ENCODE measurements at regions of chr6 and their contacts with region 1.

Region 1: GRCh38 chr6:35731736-35732532 is 4.9 kb upstream of the ARMC12 start:
- DNase-seq: peak; percentile 93 to 96 (median 94)
- H3K4me3 ChIP-seq: peak overlapping the region; percentile 30 to 85
- H3K4me3 Mint-ChIP-seq: peak overlapping the region; percentile 83 to 93 (median 88)
- H3K27ac ChIP-seq: peak overlapping the region; percentile 92
- H3K27ac Mint-ChIP-seq: peak overlapping the region; percentile 87 to 99 (median 96)
- H3K4me1 ChIP-seq: peaks cover 89% of the 10 kb centered on the region
- H3K4me1 Mint-ChIP-seq: peaks cover 50 to 92% (median 73%) of the 10 kb centered on the region in 4 donors
- H3K27me3 ChIP-seq: no peaks in the 10 kb centered on the region
- H3K27me3 Mint-ChIP-seq: no peaks in the 10 kb centered on the region

Region 2: GRCh38 chr6:35452186-35453090 is 279.5 kb before region 1 on chr6 and contains the start of gene FANCE:
- CTCF ChIA-PET with region 1: interaction called, 3 read pairs
- POLR2A ChIA-PET with region 1: interaction called, 4 read pairs
- intact Hi-C with region 1: loop called (anchors 5 kb)
- DNase-seq: peak; percentile 77 to 90 (median 81)
- H3K4me3 ChIP-seq: peak within 1 kb of the TSS; percentile 0 to 66
- H3K4me3 Mint-ChIP-seq: peak within 1 kb of the TSS; percentile 84 to 91 (median 87)
- H3K27ac ChIP-seq: peak within 1 kb of the TSS; percentile 59
- H3K27ac Mint-ChIP-seq: peak within 1 kb of the TSS; percentile 54 to 94 (median 89)
- H3K4me1 ChIP-seq: peaks cover 40% of the 10 kb centered on the region
- H3K4me1 Mint-ChIP-seq: peaks cover 29 to 53% (median 39%) of the 10 kb centered on the region in 4 donors
- H3K27me3 ChIP-seq: no peaks in the 10 kb centered on the region
- H3K27me3 Mint-ChIP-seq: no peaks in the 10 kb centered on the region
- total RNA-seq, gene FANCE: 8.9 to 9.0 TPM

Region 3: GRCh38 chr6:35583893-35584688 is 147.8 kb before region 1 on chr6:
- CTCF ChIA-PET with region 1: interaction called, 136 read pairs
- POLR2A ChIA-PET with region 1: interaction called, 20 read pairs
- intact Hi-C with region 1: loop called (anchors 1 kb)
- DNase-seq: peak; percentile 73 to 78 (median 76)
- H3K4me3 ChIP-seq: no peak overlapping the region
- H3K4me3 Mint-ChIP-seq: peak overlapping the region in 5 of 8 donors; percentile 17 to 63 (median 46)
- H3K27ac ChIP-seq: peak overlapping the region; percentile 12
- H3K27ac Mint-ChIP-seq: peak overlapping the region; percentile 39 to 89 (median 83)
- H3K4me1 ChIP-seq: peaks cover 45% of the 10 kb centered on the region
- H3K4me1 Mint-ChIP-seq: peaks cover 47 to 59% (median 50%) of the 10 kb centered on the region in 4 donors
- H3K27me3 ChIP-seq: no peaks in the 10 kb centered on the region
- H3K27me3 Mint-ChIP-seq: no peaks in the 10 kb centered on the region

Region 4: DNA sequence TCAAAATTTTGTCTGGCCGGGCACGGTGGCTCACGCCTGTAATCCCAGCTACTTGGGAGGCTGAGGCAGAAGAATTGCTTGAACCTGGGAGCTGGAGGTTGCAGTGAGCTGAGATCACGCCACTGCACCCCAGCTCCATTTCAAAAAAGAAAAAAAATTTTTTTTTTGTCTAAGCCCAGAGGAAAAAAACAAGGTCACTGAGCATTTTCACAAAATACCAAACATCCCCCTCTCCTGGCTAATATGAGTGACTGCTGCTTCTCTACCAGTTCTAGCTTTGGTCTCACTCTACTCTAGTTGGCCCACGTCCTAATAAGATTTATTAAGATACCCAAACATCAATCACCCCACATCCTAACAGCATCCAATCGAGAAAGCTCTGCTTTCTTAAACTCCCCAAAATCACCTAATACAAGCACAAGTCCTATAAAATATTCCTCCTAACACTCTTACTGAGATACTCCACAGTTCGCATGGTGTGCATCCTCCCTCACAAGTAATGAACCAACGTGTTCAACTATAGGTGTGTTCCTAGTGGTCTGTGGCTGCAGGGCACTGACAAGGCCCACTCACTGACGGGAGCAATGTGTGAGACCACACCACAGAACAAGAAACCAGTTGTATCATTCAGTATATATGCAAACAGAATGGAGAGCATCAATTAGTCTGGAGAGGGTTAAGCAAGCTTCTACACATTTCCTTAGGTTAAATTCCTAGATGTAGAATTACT is 107.4 kb before region 1 on chr6:
- CTCF ChIA-PET with region 1: interaction called, 360 read pairs
- POLR2A ChIA-PET with region 1: interaction called, 41 read pairs
- intact Hi-C with region 1: loop called (anchors 1 kb)
- DNase-seq: peak in 4 of 5 donors; percentile 62 to 66 (median 64)
- H3K4me3 ChIP-seq: no peak overlapping the region
- H3K4me3 Mint-ChIP-seq: peak overlapping the region in 6 of 8 donors; percentile 1 to 68 (median 46)
- H3K27ac ChIP-seq: no peak overlapping the region
- H3K27ac Mint-ChIP-seq: peak overlapping the region; percentile 12 to 91 (median 80)
- H3K4me1 ChIP-seq: peaks cover 42% of the 10 kb centered on the region
- H3K4me1 Mint-ChIP-seq: peaks cover 18 to 42% (median 28%) of the 10 kb centered on the region in 4 donors
- H3K27me3 ChIP-seq: no peaks in the 10 kb centered on the region
- H3K27me3 Mint-ChIP-seq: no peaks in the 10 kb centered on the region

Region 5: GRCh38 chr6:35669451-35670045 is 62.4 kb before region 1 on chr6:
- CTCF ChIA-PET with region 1: interaction called, 19 read pairs
- POLR2A ChIA-PET with region 1: interaction called, 40 read pairs
- intact Hi-C with region 1: no loop called
- DNase-seq: peak in 3 of 5 donors; percentile 25 to 47 (median 26)
- H3K4me3 ChIP-seq: peak overlapping the region; percentile 1 to 12
- H3K4me3 Mint-ChIP-seq: peak overlapping the region; percentile 57 to 92 (median 82)
- H3K27ac ChIP-seq: peak overlapping the region; percentile 52
- H3K27ac Mint-ChIP-seq: peak overlapping the region; percentile 76 to 96 (median 89)
- H3K4me1 ChIP-seq: peaks cover 89% of the 10 kb centered on the region
- H3K4me1 Mint-ChIP-seq: peaks cover 30 to 56% (median 37%) of the 10 kb centered on the region in 4 donors
- H3K27me3 ChIP-seq: no peaks in the 10 kb centered on the region
- H3K27me3 Mint-ChIP-seq: no peaks in the 10 kb centered on the region

Region 6: GRCh38 chr6:35719830-35720733 is 11.9 kb before region 1 on chr6:
- CTCF ChIA-PET with region 1: interaction called, 31 read pairs
- POLR2A ChIA-PET with region 1: interaction called, 69 read pairs
- intact Hi-C with region 1: loop called (anchors 1 kb)
- DNase-seq: no peak
- H3K4me3 ChIP-seq: peak overlapping the region in 1 of 2 donors; percentile 5
- H3K4me3 Mint-ChIP-seq: peak overlapping the region; percentile 31 to 83 (median 54)
- H3K27ac ChIP-seq: no peak overlapping the region
- H3K27ac Mint-ChIP-seq: peak overlapping the region; percentile 73 to 86 (median 79)
- H3K4me1 ChIP-seq: peaks cover 63% of the 10 kb centered on the region
- H3K4me1 Mint-ChIP-seq: peaks cover 61 to 91% (median 72%) of the 10 kb centered on the region in 4 donors
- H3K27me3 ChIP-seq: no peaks in the 10 kb centered on the region
- H3K27me3 Mint-ChIP-seq: no peaks in the 10 kb centered on the region

Region 7: DNA sequence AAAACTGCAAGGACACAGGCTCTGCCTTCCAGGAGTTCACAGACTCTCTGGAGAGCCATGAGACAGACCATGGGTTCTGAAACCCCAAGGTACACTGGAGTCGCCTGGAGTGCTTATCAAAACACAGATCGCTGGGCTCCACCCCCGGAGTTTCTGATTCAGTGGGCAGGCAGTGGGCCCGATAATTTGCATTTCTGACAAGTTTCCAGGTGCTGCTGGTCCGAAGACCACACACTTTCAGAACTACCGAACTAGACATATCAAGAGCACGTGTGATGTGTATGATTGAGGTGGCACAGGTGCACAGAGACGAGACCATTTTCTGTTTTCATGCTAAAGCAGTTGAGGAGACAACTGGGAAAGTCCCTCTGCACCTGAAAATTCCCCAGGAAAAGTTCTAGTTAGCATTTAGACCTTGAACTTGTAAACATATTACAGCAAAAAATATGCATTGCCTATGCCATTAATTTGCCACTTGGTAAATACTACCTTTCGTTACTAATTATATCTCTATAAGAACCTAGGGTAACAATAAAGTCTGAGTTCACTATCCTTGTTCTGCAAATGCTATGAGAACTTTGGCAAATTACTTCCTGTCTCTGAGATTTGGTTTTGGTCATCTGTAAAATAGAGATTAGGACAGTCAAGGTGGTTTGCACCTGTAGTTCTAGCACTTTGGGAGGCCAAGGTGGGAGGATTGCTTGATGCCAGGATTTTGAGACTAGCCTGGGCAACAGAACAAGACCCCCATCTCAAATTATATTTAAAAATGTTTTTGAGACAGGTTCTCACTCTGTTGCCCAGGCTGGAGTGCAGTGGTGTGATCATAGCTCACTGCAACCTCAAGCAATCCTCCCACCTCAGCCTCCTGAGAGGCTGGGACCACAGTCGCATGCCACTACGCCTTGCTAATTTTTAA is 1423.7 kb after region 1 on chr6:
- CTCF ChIA-PET with region 1: no interaction called
- POLR2A ChIA-PET with region 1: no interaction called
- intact Hi-C with region 1: no loop called
- DNase-seq: peak in 2 of 5 donors; percentile 25 to 55
- H3K4me3 ChIP-seq: peak overlapping the region in 1 of 2 donors; percentile 16
- H3K4me3 Mint-ChIP-seq: peak overlapping the region in 7 of 8 donors; percentile 57 to 87 (median 80)
- H3K27ac ChIP-seq: no peak overlapping the region
- H3K27ac Mint-ChIP-seq: peak overlapping the region; percentile 66 to 92 (median 84)
- H3K4me1 ChIP-seq: peaks cover 23% of the 10 kb centered on the region
- H3K4me1 Mint-ChIP-seq: peaks cover 16 to 28% (median 21%) of the 10 kb centered on the region in 4 donors
- H3K27me3 ChIP-seq: no peaks in the 10 kb centered on the region
- H3K27me3 Mint-ChIP-seq: peaks cover 0 to 2% of the 10 kb centered on the region in 2 donors